H1 (cell line): ENCODE measurements at regions of chr5 and their contacts with region 1.

Region 1: DNA sequence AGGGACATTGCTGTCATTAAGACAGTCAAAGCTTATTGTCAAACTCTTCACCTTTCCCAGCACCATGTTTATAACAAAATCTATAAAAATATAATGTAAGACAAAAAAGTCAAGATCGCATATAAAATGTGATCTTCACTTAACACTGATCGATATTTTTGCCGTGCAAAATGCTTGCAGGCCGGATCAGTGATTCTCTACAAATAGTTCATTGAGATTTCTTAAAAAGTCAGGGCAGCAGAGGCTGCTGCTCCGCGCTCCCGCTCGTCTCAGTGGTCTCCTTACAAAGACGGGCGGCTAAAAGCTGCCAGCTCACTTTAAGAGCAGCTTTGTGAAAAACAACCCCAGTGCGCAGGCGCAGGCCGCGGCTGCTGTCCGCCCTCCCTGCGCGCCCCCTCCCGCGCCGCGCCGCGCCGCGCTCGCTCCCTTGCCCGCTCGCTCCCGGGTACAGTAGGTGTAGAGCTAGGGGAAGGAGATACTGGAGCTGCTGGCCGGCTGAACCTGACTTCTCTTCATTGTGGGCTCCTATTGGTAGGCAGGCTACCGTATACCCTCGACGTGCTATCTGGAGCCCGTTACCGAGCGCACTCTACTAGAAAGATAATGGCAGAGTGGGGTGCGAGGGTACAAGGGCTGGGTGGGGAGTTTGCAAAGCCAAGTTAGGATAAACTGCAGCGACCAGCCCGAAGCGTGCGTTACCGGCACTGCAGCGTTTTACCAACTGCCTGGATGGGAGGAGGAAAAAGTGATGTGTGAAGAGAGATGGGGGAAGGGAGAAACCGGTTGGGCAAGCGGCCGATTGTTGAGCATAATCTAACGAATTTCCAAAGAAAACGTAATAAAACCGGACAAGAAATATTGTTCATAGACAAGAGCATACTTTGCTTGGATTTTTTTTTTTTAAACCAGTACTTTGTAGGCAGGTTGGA is at the start of gene ARRDC3:
- DNase-seq: peak; percentile 90 to 97
- H3K4me3 ChIP-seq: peak within 1 kb of the TSS; percentile 85 to 94 (median 90)
- H3K27ac ChIP-seq: peak within 1 kb of the TSS; percentile 93
- H3K4me1 ChIP-seq: no peaks in the 10 kb centered on the region; a peak in 2 of 7 replicates
- H3K27me3 ChIP-seq: no peaks in the 10 kb centered on the region
- CTCF ChIP-seq: 0 out of 4 replicates have a peak, but pooled peaks of 1 of the 3 experiments have one; percentile 9
- EP300 ChIP-seq: peak in 1 of 2 experiments; percentile 3; a peak in 1 of 3 replicates
- POLR2A ChIP-seq: peak; percentile 92 to 98
- RAD21 ChIP-seq: peak in 1 of 2 experiments; percentile 15; a peak in 1 of 4 replicates
- total RNA-seq, gene ARRDC3: 5.4 and 5.7 TPM in 2 replicates

Region 2: DNA sequence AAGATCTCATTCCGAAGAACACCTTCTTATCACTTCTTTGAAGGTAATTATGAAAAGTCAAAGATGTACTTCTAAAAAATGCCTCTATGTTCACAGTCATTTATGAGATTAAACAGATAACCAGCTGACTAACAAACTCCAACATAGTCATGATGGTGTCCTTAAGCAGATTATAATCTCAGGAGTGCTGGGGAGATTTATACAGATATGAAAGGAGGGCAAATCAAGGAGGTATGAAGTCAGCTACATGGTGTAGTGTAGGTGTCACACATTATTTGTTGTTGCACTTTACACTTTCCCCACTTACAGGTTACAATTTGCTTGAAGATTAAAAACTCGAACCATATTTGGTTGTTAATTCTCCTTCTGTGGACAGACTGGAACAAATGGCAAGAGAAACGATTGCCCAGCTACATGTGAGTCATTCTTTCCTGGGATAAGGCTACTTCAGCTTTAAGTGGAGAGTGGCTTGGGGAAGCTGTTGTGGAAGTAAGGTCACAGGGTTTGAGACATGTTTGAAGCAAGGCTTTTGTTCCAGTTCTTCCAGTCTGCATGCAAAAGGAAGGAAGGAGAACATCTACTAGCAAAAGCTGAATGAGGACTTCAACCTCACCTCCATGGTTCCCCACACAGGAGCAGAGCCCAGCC is 504.6 kb before region 1 on chr5:
- CTCF ChIA-PET with region 1: interaction called, 10 read pairs
- POLR2A ChIA-PET with region 1: interaction called, 3 read pairs
- DNase-seq: no peak
- H3K4me3 ChIP-seq: no peak overlapping the region
- H3K27ac ChIP-seq: no peak overlapping the region
- H3K4me1 ChIP-seq: peaks cover 0 to 17% (median 10%) of the 10 kb centered on the region in 4 experiments; a peak in 4 of 7 replicates
- H3K27me3 ChIP-seq: no peaks in the 10 kb centered on the region
- CTCF ChIP-seq: no peak
- EP300 ChIP-seq: no peak
- POLR2A ChIP-seq: no peak
- RAD21 ChIP-seq: no peak

Region 3: DNA sequence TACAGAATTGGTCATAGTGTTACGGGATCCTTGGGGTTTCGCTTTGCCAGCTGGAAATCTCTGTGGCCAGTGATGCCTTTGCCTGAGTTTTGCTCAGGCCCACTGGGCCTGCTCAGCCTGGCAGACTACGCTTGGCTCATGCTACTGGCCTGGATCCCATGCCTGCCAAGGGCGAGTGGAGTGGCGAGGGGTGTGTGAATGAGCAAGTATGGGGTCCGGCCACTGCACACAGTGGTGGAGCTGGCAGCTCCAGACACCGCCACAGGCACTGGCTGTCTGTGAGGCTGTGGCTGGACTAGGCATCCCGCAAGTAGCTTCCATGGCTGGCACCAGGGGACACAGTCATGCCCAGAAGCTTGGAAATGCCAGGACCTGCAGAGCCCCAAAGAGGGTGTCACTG is 240.5 kb before region 1 on chr5:
- CTCF ChIA-PET with region 1: interaction called, 13 read pairs
- POLR2A ChIA-PET with region 1: interaction called, 4 read pairs
- DNase-seq: no peak
- H3K4me3 ChIP-seq: no peak overlapping the region
- H3K27ac ChIP-seq: no peak overlapping the region
- H3K4me1 ChIP-seq: peaks cover 0 to 2% (median 0%) of the 10 kb centered on the region in 4 experiments; a peak in 5 of 7 replicates
- H3K27me3 ChIP-seq: peaks cover 0 to 1% (median 0%) of the 10 kb centered on the region in 4 experiments; a peak in 1 of 7 replicates
- CTCF ChIP-seq: no peak
- EP300 ChIP-seq: no peak
- POLR2A ChIP-seq: no peak
- RAD21 ChIP-seq: no peak

Region 4: GRCh38 chr5:91225848-91226686 is 157.2 kb before region 1 on chr5:
- CTCF ChIA-PET with region 1: interaction called, 144 read pairs
- POLR2A ChIA-PET with region 1: interaction called, 13 read pairs
- DNase-seq: peak; percentile 15 to 77
- H3K4me3 ChIP-seq: no peak overlapping the region
- H3K27ac ChIP-seq: no peak overlapping the region
- H3K4me1 ChIP-seq: no peaks in the 10 kb centered on the region; a peak in 2 of 7 replicates
- H3K27me3 ChIP-seq: no peaks in the 10 kb centered on the region
- CTCF ChIP-seq: peak; percentile 63 to 95 (median 74)
- EP300 ChIP-seq: no peak
- POLR2A ChIP-seq: no peak
- RAD21 ChIP-seq: peak; percentile 93

Region 5: DNA sequence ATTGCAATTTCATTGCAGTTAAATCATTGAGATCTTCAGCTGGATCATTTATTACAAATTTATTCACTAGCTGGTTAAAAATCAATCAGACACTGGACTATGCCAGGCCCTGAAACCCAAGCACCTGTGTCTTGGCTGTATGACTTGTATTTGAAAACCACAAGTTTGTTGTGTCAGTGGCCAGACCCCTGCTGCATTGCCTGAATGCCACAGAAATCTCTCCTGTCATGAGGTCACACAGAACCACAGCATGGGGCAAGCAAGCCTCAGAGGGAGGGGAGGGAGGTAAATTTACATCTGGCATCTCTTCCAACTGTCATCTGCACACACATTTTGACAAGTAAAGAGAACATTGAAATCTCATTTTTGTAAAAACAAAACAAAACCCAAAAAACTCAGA is 90.2 kb before region 1 on chr5:
- CTCF ChIA-PET with region 1: interaction called, 5 read pairs
- POLR2A ChIA-PET with region 1: interaction called, 14 read pairs
- DNase-seq: no peak
- H3K4me3 ChIP-seq: no peak overlapping the region
- H3K27ac ChIP-seq: no peak overlapping the region
- H3K4me1 ChIP-seq: peaks cover 0 to 4% (median 0%) of the 10 kb centered on the region in 4 experiments; a peak in 1 of 7 replicates
- H3K27me3 ChIP-seq: no peaks in the 10 kb centered on the region
- CTCF ChIP-seq: no peak
- EP300 ChIP-seq: no peak
- POLR2A ChIP-seq: no peak
- RAD21 ChIP-seq: no peak

Region 6: DNA sequence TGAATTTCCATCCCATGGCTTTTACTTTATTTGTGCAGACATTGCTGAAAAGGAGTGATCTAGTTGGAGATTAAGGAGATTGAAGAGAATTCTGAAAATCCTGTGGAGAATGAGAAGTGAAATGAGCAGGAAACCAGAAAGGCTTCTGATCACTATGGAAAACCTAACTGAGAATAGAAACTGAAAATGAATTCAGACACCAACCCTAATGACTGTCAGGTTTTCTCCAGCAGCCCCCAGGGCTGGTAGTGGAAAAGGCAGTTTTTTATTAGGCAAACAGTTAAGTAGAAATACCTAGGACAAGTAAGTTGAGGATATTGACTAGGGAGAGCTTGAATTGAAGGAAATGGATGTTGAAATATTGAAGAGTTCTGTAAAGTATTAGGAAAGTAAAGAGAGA is 14.5 kb after region 1 on chr5:
- CTCF ChIA-PET with region 1: interaction called, 51 read pairs
- POLR2A ChIA-PET with region 1: interaction called, 12 read pairs
- DNase-seq: no peak
- H3K4me3 ChIP-seq: no peak overlapping the region
- H3K27ac ChIP-seq: no peak overlapping the region
- H3K4me1 ChIP-seq: peaks cover 0 to 5% (median 3%) of the 10 kb centered on the region in 4 experiments; a peak in 2 of 7 replicates
- H3K27me3 ChIP-seq: no peaks in the 10 kb centered on the region
- CTCF ChIP-seq: no peak
- EP300 ChIP-seq: no peak
- POLR2A ChIP-seq: no peak
- RAD21 ChIP-seq: no peak

Region 7: DNA sequence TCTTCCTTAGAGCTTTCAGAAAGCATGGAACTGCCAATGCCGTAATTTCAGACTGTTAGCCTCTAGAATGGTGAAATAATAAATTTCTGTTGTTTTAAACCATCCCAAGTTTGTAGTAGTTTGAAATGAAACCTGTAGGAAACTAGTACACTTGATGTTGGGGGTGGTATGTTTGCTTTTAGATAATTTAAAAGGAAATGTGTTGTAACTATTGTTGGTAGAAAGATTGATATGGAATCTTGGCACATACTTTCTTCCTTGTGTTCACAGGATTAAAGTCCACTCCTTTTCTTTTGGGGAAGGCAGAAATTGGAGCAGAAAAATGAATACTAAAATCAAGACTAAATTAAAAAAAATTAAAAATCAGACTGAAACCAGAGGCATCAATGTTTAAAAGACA is 65.8 kb after region 1 on chr5:
- CTCF ChIA-PET with region 1: no interaction called
- POLR2A ChIA-PET with region 1: no interaction called
- DNase-seq: no peak
- H3K4me3 ChIP-seq: no peak overlapping the region
- H3K27ac ChIP-seq: no peak overlapping the region
- H3K4me1 ChIP-seq: peaks cover 0 to under 1% (median 0%) of the 10 kb centered on the region in 4 experiments; a peak in 1 of 7 replicates
- H3K27me3 ChIP-seq: no peaks in the 10 kb centered on the region; a peak in 1 of 7 replicates
- CTCF ChIP-seq: no peak
- EP300 ChIP-seq: no peak
- POLR2A ChIP-seq: no peak
- RAD21 ChIP-seq: no peak

Region 8: DNA sequence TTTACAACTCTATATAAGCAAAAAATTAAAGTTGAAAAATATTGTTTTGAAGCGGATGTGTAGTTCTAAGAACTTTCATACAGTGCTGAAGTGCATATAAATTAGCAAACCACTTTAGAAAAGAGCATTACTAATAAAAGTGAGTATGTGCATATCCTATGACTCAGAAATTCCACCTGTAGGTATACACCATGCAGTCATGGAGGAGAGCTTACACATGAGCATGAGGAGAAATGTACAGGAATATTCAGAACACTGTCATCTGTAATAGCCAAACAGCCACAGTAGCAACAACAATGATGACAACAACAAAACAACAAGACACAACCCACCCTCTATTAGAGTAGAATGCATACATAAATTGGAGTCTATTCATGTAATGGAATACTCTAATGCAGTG is 138.0 kb after region 1 on chr5:
- CTCF ChIA-PET with region 1: no interaction called
- POLR2A ChIA-PET with region 1: no interaction called
- DNase-seq: no peak
- H3K4me3 ChIP-seq: no peak overlapping the region
- H3K27ac ChIP-seq: no peak overlapping the region
- H3K4me1 ChIP-seq: no peaks in the 10 kb centered on the region
- H3K27me3 ChIP-seq: no peaks in the 10 kb centered on the region
- CTCF ChIP-seq: no peak
- EP300 ChIP-seq: no peak
- POLR2A ChIP-seq: no peak
- RAD21 ChIP-seq: no peak

Region 9: DNA sequence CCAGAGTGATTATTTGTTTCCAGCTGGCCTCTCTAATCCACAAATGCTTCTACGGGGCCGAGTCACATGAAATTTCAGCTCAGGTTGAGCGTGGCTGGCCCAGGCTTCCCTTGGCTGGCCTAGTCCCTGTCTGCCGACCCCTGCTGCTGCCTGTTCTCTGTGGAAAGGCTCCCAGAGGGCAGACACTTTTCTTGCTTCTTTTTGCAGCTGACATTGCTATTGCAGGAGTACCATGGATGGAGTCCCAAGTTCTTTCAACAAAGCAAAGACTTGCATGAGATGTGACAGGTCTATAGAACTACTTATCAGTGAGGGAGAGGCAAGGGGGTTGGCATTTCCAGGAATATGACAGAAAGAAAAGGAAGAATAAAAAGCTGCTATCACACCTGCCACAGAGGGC is 287.3 kb after region 1 on chr5:
- CTCF ChIA-PET with region 1: no interaction called
- POLR2A ChIA-PET with region 1: no interaction called
- DNase-seq: peak; percentile 10 to 50
- H3K4me3 ChIP-seq: no peak overlapping the region
- H3K27ac ChIP-seq: no peak overlapping the region
- H3K4me1 ChIP-seq: no peaks in the 10 kb centered on the region
- H3K27me3 ChIP-seq: no peaks in the 10 kb centered on the region
- CTCF ChIP-seq: no peak
- EP300 ChIP-seq: no peak
- POLR2A ChIP-seq: no peak
- RAD21 ChIP-seq: no peak